ENCODE measurements at regions of chr1 and their contacts with region 1.

Region 1: GRCh38 chr1:184051485-184052193 is at the start of gene TSEN15:
- DNase-seq: peak in 1 of 2 experiments; percentile 81
- H3K4me3 ChIP-seq: peak within 1 kb of the TSS; percentile 69 to 87 (median 83)
- H3K27ac ChIP-seq: peak within 1 kb of the TSS; percentile 84
- H3K4me1 ChIP-seq: peaks cover 6 to 14% (median 12%) of the 10 kb centered on the region in 4 experiments; a peak in 5 of 7 replicates
- H3K27me3 ChIP-seq: no peaks in the 10 kb centered on the region
- CTCF ChIP-seq: no peak
- EP300 ChIP-seq: no peak
- POLR2A ChIP-seq: peak; percentile 81 to 84
- RAD21 ChIP-seq: no peak
- total RNA-seq, gene TSEN15: 28.2 and 31.4 TPM in 2 replicates

Region 2: GRCh38 chr1:183870351-183871077 is 181.1 kb before region 1 on chr1:
- CTCF ChIA-PET with region 1: no interaction called
- POLR2A ChIA-PET with region 1: no interaction called
- DNase-seq: no peak
- H3K4me3 ChIP-seq: no peak overlapping the region
- H3K27ac ChIP-seq: no peak overlapping the region
- H3K4me1 ChIP-seq: peaks cover 1 to 7% (median 6%) of the 10 kb centered on the region in 4 experiments; a peak in 4 of 7 replicates
- H3K27me3 ChIP-seq: no peaks in the 10 kb centered on the region
- CTCF ChIP-seq: no peak
- EP300 ChIP-seq: no peak
- POLR2A ChIP-seq: no peak
- RAD21 ChIP-seq: no peak

Region 3: GRCh38 chr1:184036517-184036949 is 15.1 kb before region 1 on chr1:
- CTCF ChIA-PET with region 1: interaction called, 6 read pairs
- POLR2A ChIA-PET with region 1: interaction called, 50 read pairs
- DNase-seq: peak in 1 of 2 experiments; percentile 81
- H3K4me3 ChIP-seq: peak overlapping the region; percentile 62 to 73 (median 70)
- H3K27ac ChIP-seq: no peak overlapping the region
- H3K4me1 ChIP-seq: peaks cover 0 to 13% (median 4%) of the 10 kb centered on the region in 4 experiments; a peak in 6 of 7 replicates
- H3K27me3 ChIP-seq: peaks cover 11 to 49% (median 43%) of the 10 kb centered on the region in 4 experiments
- CTCF ChIP-seq: no peak
- EP300 ChIP-seq: no peak
- POLR2A ChIP-seq: no peak
- RAD21 ChIP-seq: no peak

Region 4: DNA sequence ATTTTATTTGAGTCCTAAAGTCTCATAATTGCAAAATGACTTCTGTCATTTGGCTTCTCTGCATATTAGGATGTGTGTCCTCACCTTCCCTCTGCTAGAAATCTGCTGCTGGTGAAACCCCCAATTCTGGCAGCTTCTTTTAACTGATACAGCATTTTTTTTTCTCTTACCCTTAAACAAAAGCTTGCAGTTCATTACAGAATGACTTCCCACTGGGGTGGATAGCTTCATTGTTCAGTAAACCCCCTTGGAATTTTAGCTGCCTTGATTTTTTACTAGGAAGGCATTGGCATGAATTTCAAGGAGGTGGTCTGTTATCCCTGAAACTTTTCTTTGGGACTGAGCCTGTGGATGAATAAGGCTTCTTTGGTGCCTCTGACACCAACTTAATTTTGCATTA is 16.7 kb after region 1 on chr1:
- CTCF ChIA-PET with region 1: no interaction called
- POLR2A ChIA-PET with region 1: interaction called, 14 read pairs
- DNase-seq: no peak
- H3K4me3 ChIP-seq: peak overlapping the region in 1 of 4 experiments; percentile 18; a peak in 1 of 8 replicates
- H3K27ac ChIP-seq: no peak overlapping the region
- H3K4me1 ChIP-seq: peaks cover 0 to 11% (median 1%) of the 10 kb centered on the region in 4 experiments; a peak in 2 of 7 replicates
- H3K27me3 ChIP-seq: peaks cover 0 to 1% (median 0%) of the 10 kb centered on the region in 4 experiments; a peak in 1 of 7 replicates
- CTCF ChIP-seq: no peak
- EP300 ChIP-seq: no peak
- POLR2A ChIP-seq: no peak
- RAD21 ChIP-seq: no peak

Measured in H1 (cell line).